ENCODE measurements at regions of chr11 and their contacts with region 1.

Region 1: GRCh38 chr11:27370374-27370773 is 7.4 kb upstream of the CCDC34 start:
- DNase-seq: no peak
- ATAC-seq: no peak
- H3K4me3 ChIP-seq: no peak overlapping the region
- H3K27ac ChIP-seq: no peak overlapping the region
- H3K4me1 ChIP-seq: peaks cover 23 to 47% (median 47%) of the 10 kb centered on the region in 3 donors
- H3K27me3 ChIP-seq: no peaks in the 10 kb centered on the region
- CTCF ChIP-seq: no peak

Region 2: DNA sequence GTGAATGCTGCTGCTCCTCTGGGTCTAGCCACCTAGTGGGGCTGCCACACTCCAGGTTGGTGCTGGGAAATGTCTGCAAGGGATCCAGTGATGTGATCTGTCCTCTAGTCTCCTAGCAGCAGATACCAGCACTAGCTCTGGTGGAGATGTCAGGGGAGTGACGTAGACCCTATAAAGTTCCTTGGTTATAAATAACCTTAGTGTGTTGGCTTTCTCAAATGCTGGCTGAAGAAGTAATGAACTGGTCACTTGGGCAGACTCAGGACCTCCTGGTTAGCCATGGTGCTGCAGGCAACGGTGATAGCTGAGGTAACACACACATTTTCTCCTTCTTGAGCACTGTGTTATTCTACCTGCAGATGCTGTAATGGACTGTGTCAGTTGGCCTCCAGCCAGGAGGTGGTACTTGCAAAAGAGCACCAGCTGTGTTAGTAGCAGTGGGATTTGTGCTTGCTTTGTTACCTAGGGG is 294.2 kb before region 1 on chr11:
- intact Hi-C with region 1: no loop called
- DNase-seq: peak in 2 of 6 donors; percentile 21 to 25
- ATAC-seq: no peak
- H3K4me3 ChIP-seq: no peak overlapping the region
- H3K27ac ChIP-seq: no peak overlapping the region
- H3K4me1 ChIP-seq: no peaks in the 10 kb centered on the region
- H3K27me3 ChIP-seq: no peaks in the 10 kb centered on the region
- CTCF ChIP-seq: no peak

Region 3: GRCh38 chr11:27331981-27332380 is 38.4 kb before region 1 on chr11:
- intact Hi-C with region 1: no loop called
- DNase-seq: no peak
- ATAC-seq: no peak
- H3K4me3 ChIP-seq: no peak overlapping the region
- H3K27ac ChIP-seq: no peak overlapping the region
- H3K4me1 ChIP-seq: peaks cover 0 to 9% (median 0%) of the 10 kb centered on the region in 3 donors
- H3K27me3 ChIP-seq: no peaks in the 10 kb centered on the region
- CTCF ChIP-seq: no peak

Region 4: DNA sequence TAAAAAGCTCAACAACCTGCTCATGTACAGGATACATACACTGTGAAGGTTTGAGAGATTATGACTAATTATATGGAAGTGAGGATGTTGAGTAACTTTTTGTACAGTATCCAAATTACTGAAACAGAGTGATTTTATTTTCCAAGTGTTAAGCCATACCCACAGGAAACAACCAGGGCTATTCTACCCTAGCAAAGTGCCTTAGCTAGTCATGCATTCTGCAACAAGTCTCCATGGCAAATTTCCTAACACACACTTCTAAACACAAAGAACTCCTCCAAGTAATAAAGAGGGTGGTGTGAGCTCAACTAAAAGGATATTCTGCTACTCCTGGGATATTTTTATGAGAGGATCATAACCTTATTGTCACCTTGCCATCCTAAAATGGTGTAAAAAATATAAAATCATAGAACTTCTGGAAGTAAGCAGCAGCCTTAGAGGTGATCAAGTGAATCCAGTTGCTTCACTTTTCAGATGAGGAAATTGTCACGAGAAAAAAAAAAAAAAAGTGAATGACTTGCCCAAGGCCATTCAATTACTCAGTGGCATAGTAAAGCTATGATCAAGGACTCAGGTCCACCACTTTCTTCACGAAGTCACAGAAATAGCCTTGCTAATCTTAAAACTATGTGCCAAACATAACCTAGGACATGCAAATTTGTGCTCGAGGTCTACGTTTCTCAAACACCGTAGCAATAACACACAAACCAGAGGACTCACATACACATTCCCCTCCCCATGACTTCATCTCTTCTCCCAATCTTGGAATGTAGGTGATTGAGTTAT is 98.0 kb after region 1 on chr11:
- intact Hi-C with region 1: loop called (anchors 10 kb)
- DNase-seq: peak in 2 of 6 donors; percentile 26 to 41
- ATAC-seq: peak; percentile 17 to 45 (median 34)
- H3K4me3 ChIP-seq: peak overlapping the region; percentile 70 to 100 (median 80)
- H3K27ac ChIP-seq: peak overlapping the region; percentile 80 to 95 (median 94)
- H3K4me1 ChIP-seq: peaks cover 21 to 39% (median 35%) of the 10 kb centered on the region in 3 donors
- H3K27me3 ChIP-seq: no peaks in the 10 kb centered on the region
- CTCF ChIP-seq: no peak

Measured in pancreas (tissue), 10 donors.